ENCODE measurements at regions of chr16 and their contacts with region 1.

Region 1: GRCh38 chr16:56916571-56917403 is 15.2 kb upstream of the HERPUD1 start:
- DNase-seq: peak; percentile 39
- H3K4me3 Mint-ChIP-seq: peak overlapping the region; percentile 40
- H3K27ac Mint-ChIP-seq: peak overlapping the region; percentile 85
- H3K4me1 Mint-ChIP-seq: peaks cover 37% of the 10 kb centered on the region
- H3K27me3 Mint-ChIP-seq: no peaks in the 10 kb centered on the region

Region 2: DNA sequence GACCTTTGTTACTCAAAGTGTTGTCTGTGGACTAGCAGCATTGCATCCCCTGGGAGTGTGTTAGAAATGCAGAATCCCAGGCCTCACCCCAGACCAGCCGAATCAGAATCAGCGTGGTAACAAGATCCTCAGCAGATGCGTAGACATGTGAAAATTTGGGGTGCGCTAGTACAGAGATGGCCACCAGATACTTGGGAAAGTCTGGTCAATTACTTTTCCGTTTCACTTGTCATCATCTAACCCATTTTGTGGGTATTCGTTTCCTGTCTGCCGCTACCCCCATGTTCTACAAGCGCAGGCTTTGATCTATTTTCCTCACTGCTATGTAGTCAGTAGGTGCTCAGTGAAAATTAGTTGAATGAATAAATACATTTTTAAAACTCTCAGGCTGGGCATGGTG is 17.9 kb before region 1 on chr16:
- intact Hi-C with region 1: loop called (anchors 2 kb)
- DNase-seq: no peak
- H3K4me3 Mint-ChIP-seq: no peak overlapping the region
- H3K27ac Mint-ChIP-seq: no peak overlapping the region
- H3K4me1 Mint-ChIP-seq: peaks cover 17% of the 10 kb centered on the region
- H3K27me3 Mint-ChIP-seq: peaks cover 14% of the 10 kb centered on the region

Region 3: DNA sequence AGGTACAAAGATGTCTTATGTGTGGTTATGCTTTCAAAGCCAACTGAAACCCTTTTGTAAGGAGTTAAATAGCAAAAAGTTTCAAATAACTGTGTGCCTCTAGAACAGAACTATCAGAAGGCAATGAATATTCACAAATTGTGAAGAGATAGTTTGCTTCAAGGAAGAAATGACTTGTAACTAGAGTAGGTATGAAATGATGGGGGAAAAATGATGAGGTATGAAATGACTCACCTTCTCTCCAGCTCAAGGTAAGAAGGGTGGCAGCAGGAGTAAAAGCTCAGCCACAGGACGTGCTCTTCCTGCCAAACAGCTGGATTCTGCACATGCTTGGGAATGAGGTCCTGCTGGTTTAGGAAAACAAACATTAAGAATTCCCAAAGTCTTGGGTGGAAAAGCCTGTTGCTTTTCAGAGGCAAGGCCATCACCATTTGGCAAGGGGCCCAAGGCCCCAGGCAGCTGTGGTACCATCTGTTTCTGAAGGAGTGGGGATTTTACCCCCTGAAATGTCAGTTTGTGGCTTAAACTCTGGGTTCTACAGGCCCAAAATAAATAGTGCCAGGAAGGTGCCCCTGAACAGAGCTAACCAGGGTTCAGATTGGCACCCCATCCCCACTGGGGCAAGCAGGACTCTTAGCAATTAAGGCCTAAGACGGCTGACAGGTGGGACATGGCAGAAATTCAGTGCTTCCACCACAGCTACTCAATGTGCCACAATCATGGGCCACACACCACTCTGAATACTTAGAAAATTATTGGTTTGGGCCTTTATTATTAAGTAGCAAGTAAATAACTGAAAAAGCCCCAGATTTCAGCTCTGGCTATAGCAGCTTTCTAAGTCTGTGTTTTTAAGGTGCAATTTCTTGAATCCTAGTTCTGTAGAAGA is 28.4 kb after region 1 on chr16:
- intact Hi-C with region 1: loop called (anchors 2 kb)
- DNase-seq: no peak
- H3K4me3 Mint-ChIP-seq: no peak overlapping the region
- H3K27ac Mint-ChIP-seq: peak overlapping the region; percentile 87
- H3K4me1 Mint-ChIP-seq: peaks cover 36% of the 10 kb centered on the region
- H3K27me3 Mint-ChIP-seq: no peaks in the 10 kb centered on the region

Measured in activated T-helper 2 cell treated with anti-CD3 and anti-CD28 coated beads, Interferon-gamma antibody, Interleukin-2, Interleukin-4, amounts not matched to agents 10 μg/mL and 5 μg/mL and 100 μg/mL, durations not matched to agents 14 hours and 24 hours and 36 hours (primary cell).